ENCODE measurements at regions of chr15 and their contacts with region 1.

Region 1: DNA sequence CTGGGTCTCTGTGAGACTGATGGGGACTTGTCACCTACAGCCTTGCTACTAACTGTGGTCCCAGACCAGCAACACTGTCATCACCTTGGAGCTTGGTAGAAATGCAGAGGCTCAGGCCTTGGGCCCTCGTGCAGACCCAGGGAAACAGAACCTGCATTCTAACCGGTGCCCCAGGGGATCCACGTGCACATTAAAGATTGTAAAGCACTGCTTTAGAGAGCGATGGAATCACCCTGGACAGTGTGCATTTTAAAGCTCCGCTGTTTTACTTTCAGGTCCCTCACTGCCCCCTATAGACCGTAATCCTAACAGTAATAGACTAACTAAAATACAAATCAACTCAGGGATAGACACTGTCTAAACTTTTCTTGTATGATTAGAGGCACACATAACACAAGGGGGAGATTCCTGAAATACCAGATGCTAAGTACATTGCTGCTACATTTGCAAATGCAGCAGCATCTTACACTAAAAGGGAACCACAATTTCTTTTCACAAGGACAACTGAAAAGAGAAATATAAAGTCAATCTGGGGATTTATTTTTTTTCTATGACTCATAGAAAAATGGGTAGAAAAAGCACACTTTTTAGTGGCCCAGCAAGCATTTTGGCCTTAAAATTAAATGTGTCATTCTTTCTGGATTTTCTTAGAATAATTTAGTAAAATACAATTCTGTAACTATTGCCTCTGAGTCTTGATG is 10.5 kb upstream of the SH3GL3 start:
- DNase-seq: peak in 1 of 2 experiments; percentile 49
- H3K4me3 ChIP-seq: no peak overlapping the region
- H3K27ac ChIP-seq: no peak overlapping the region
- H3K4me1 ChIP-seq: peaks cover 0 to 7% (median 0%) of the 10 kb centered on the region in 4 experiments; a peak in 1 of 7 replicates
- H3K27me3 ChIP-seq: no peaks in the 10 kb centered on the region
- CTCF ChIP-seq: peak in 2 of 3 experiments; percentile 50 to 62; a peak in 2 of 4 replicates
- EP300 ChIP-seq: no peak
- POLR2A ChIP-seq: no peak
- RAD21 ChIP-seq: peak; percentile 86 to 88

Region 2: DNA sequence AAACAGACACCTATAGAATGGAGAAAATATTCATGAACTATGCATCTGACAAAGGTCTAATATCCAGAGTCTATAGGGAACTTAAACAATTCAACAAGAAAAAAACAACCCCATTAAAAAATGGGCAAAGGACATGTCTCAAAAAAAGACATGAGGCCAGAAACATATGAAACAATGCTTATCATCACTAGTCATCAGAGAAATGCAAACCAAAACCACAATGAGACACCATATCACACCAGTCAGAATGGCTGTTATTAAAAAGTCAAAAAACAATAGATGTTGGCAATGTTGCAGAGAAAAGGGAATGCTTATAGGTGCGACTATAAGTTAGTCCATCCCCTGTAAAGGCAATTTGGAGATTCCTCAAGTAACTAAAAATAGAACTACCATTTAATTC is 217.6 kb before region 1 on chr15:
- CTCF ChIA-PET with region 1: no interaction called
- POLR2A ChIA-PET with region 1: no interaction called
- DNase-seq: no peak
- H3K4me3 ChIP-seq: no peak overlapping the region
- H3K27ac ChIP-seq: no peak overlapping the region
- H3K4me1 ChIP-seq: no peaks in the 10 kb centered on the region
- H3K27me3 ChIP-seq: no peaks in the 10 kb centered on the region
- CTCF ChIP-seq: no peak
- EP300 ChIP-seq: no peak
- POLR2A ChIP-seq: no peak
- RAD21 ChIP-seq: no peak

Region 3: GRCh38 chr15:83422081-83422480 is 14.5 kb before region 1 on chr15:
- CTCF ChIA-PET with region 1: interaction called, 21 read pairs
- POLR2A ChIA-PET with region 1: no interaction called
- DNase-seq: no peak
- H3K4me3 ChIP-seq: no peak overlapping the region
- H3K27ac ChIP-seq: no peak overlapping the region
- H3K4me1 ChIP-seq: no peaks in the 10 kb centered on the region
- H3K27me3 ChIP-seq: peaks cover 0 to 1% (median 0%) of the 10 kb centered on the region in 4 experiments; a peak in 1 of 7 replicates
- CTCF ChIP-seq: no peak
- EP300 ChIP-seq: no peak
- POLR2A ChIP-seq: no peak
- RAD21 ChIP-seq: no peak

Region 4: DNA sequence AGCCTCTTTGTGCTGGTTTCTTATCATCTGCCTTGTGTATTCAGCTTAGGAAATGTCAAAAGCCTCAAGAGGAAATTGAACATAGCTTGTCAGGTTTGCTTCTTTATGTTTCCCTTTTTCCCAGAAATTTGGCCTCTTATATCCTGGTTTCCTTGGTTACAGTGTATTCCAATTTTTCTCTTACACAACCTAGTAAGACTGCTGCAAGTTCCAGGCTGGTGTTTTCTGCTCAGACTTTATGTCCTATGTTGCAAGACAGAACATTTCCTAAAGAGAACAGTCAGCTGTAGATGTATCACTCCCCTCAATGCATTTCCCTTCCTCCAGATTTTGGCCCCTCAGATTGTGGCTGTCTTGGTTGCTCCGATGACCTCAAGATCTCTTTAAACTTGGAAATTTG is 113.0 kb after region 1 on chr15:
- CTCF ChIA-PET with region 1: interaction called, 29 read pairs
- POLR2A ChIA-PET with region 1: no interaction called
- DNase-seq: no peak
- H3K4me3 ChIP-seq: no peak overlapping the region
- H3K27ac ChIP-seq: no peak overlapping the region
- H3K4me1 ChIP-seq: peaks cover 2 to 20% (median 9%) of the 10 kb centered on the region in 4 experiments; a peak in 6 of 7 replicates
- H3K27me3 ChIP-seq: no peaks in the 10 kb centered on the region
- CTCF ChIP-seq: no peak
- EP300 ChIP-seq: no peak
- POLR2A ChIP-seq: no peak
- RAD21 ChIP-seq: no peak

Region 5: GRCh38 chr15:83571820-83572707 is 135.5 kb after region 1 on chr15:
- CTCF ChIA-PET with region 1: interaction called, 245 read pairs
- POLR2A ChIA-PET with region 1: no interaction called
- DNase-seq: peak in 1 of 2 experiments; percentile 53
- H3K4me3 ChIP-seq: no peak overlapping the region
- H3K27ac ChIP-seq: no peak overlapping the region
- H3K4me1 ChIP-seq: no peaks in the 10 kb centered on the region
- H3K27me3 ChIP-seq: no peaks in the 10 kb centered on the region
- CTCF ChIP-seq: peak in 2 of 3 experiments; percentile 55 to 56; a peak in 3 of 4 replicates
- EP300 ChIP-seq: no peak
- POLR2A ChIP-seq: no peak
- RAD21 ChIP-seq: peak; percentile 56 to 70

Region 6: GRCh38 chr15:83657549-83657948 is 220.9 kb after region 1 on chr15:
- CTCF ChIA-PET with region 1: interaction called, 12 read pairs
- POLR2A ChIA-PET with region 1: no interaction called
- DNase-seq: peak in 1 of 2 experiments; percentile 63
- H3K4me3 ChIP-seq: no peak overlapping the region
- H3K27ac ChIP-seq: no peak overlapping the region
- H3K4me1 ChIP-seq: peaks cover 0 to 5% (median 2%) of the 10 kb centered on the region in 4 experiments; a peak in 5 of 7 replicates
- H3K27me3 ChIP-seq: peaks cover 10 to 33% (median 29%) of the 10 kb centered on the region in 4 experiments
- CTCF ChIP-seq: peak; percentile 70 to 81 (median 80)
- EP300 ChIP-seq: no peak
- POLR2A ChIP-seq: no peak
- RAD21 ChIP-seq: peak; percentile 79 to 84

Measured in H1 (cell line).